Caco-2 (cell line): ENCODE measurements at regions of chr2 and their contacts with region 1.

Region 1: DNA sequence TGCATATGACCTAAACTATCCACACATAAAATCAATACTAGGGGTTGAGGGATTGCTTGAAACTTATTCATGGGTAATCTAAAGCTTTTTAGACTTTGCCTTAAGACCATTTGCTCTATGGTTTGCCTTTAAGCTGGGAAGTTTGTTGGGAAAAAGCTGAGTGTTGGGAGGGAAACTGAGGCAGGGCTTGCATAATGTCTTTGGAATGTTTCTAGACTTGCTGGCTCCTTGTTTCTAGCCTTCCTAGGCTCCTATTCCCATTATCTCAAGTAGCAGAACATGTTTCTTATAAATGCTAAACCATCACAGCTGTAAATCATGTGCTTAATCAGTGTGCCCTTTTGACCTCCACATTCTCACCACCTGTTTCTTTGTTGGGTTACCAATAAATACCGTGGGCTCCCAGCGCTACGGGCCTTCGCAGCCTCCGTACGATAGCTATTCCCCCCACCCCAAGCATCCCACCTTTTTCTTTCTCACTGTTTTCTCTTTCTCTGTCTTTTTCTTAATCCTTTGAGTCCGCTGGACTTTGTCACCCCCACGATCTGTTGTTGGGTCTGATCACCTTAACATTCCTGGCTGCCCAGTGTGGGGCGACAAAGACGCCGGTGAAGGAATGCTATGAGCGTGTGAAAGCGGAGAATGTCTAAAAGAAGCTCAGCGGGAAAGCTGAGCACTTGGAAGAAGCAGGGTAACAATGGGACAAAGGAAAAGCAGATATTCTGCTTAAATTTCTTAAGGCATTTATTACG is 49.4 kb upstream of the CWC22 start:
- DNase-seq: peak; percentile 34 to 56
- H3K4me3 ChIP-seq: no peak overlapping the region
- H3K4me3 Mint-ChIP-seq: peak overlapping the region; percentile 42
- H3K27ac Mint-ChIP-seq: peak overlapping the region; percentile 68
- H3K4me1 ChIP-seq: peaks cover 30% of the 10 kb centered on the region
- H3K4me1 Mint-ChIP-seq: peaks cover 15% of the 10 kb centered on the region
- H3K27me3 ChIP-seq: no peaks in the 10 kb centered on the region
- H3K27me3 Mint-ChIP-seq: no peaks in the 10 kb centered on the region
- CTCF ChIP-seq: no peak

Region 2: GRCh38 chr2:180000434-180000833 is 56.1 kb before region 1 on chr2:
- CTCF ChIA-PET with region 1: no interaction called
- POLR2A ChIA-PET with region 1: no interaction called
- intact Hi-C with region 1: loop called (anchors 2 kb)
- DNase-seq: no peak
- H3K4me3 ChIP-seq: no peak overlapping the region
- H3K4me3 Mint-ChIP-seq: no peak overlapping the region
- H3K27ac Mint-ChIP-seq: no peak overlapping the region
- H3K4me1 ChIP-seq: peaks cover 14% of the 10 kb centered on the region; the same call in 1 of the 2 replicates
- H3K4me1 Mint-ChIP-seq: peaks cover 14% of the 10 kb centered on the region
- H3K27me3 ChIP-seq: no peaks in the 10 kb centered on the region
- H3K27me3 Mint-ChIP-seq: no peaks in the 10 kb centered on the region
- CTCF ChIP-seq: no peak

Region 3: GRCh38 chr2:180006781-180007579 is 49.6 kb before region 1 on chr2 and contains the start of gene CWC22:
- CTCF ChIA-PET with region 1: no interaction called
- POLR2A ChIA-PET with region 1: no interaction called
- intact Hi-C with region 1: loop called (anchors 1 kb)
- DNase-seq: peak; percentile 81 to 87
- H3K4me3 ChIP-seq: peak within 1 kb of the TSS; percentile 81
- H3K4me3 Mint-ChIP-seq: peak within 1 kb of the TSS; percentile 95
- H3K27ac Mint-ChIP-seq: peak within 1 kb of the TSS; percentile 100
- H3K4me1 ChIP-seq: peaks cover 14% of the 10 kb centered on the region; the same call in 1 of the 2 replicates
- H3K4me1 Mint-ChIP-seq: peaks cover 13% of the 10 kb centered on the region
- H3K27me3 ChIP-seq: no peaks in the 10 kb centered on the region
- H3K27me3 Mint-ChIP-seq: no peaks in the 10 kb centered on the region
- CTCF ChIP-seq: no peak
- total RNA-seq, gene CWC22: 20.3 and 20.5 TPM in 2 replicates